ENCODE measurements at regions of chr19 and their contacts with region 1.

Region 1: GRCh38 chr19:30682999-30683536 is 310.9 kb downstream of the ZNF536 start:
- DNase-seq: peak; percentile 61 to 93 (median 83)
- ATAC-seq: peak; percentile 94
- H3K4me3 ChIP-seq: no peak overlapping the region
- H3K27ac ChIP-seq: no peak overlapping the region
- H3K4me1 ChIP-seq: no peaks in the 10 kb centered on the region
- H3K27me3 ChIP-seq: peaks cover 0 to 77% of the 10 kb centered on the region in 2 donors
- CTCF ChIP-seq: peak; percentile 82 to 89

Region 2: GRCh38 chr19:32224371-32225244 is 1541.5 kb after region 1 on chr19:
- intact Hi-C with region 1: loop called in 1 of 2 experiments (anchors 10 kb)
- DNase-seq: peak; percentile 52 to 94 (median 66)
- ATAC-seq: peak; percentile 100
- H3K4me3 ChIP-seq: peak overlapping the region in 1 of 2 donors; percentile 11
- H3K27ac ChIP-seq: no peak overlapping the region
- H3K4me1 ChIP-seq: peaks cover 4 to 10% of the 10 kb centered on the region in 2 donors
- H3K27me3 ChIP-seq: peaks cover 26 to 59% of the 10 kb centered on the region in 2 donors
- CTCF ChIP-seq: peak; percentile 99 to 100

Measured in left lung (tissue), 14 donors.